A549 (cell line): ENCODE measurements at regions of chr18 and their contacts with region 1.

Region 1: DNA sequence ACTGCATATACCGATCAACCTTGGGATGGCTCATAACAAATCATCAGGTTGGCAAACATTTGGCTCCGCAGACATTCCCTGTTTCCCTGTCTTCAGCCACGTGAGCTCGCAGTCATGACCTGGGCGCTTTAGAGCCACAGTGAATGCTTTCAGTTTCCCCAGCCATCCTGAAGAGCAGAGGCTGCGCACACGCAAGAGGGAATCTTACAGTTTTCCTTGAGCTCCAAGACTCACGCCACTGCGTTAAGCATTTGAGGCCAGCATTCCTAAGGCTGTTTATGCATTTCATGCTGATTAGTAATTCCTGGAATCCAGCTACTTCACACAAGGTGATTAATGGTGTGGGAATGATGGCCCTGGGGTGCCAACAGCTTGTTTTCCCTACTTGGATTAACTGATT is 95.1 kb downstream of the MTCL1 start:
- DNase-seq: peak; percentile 60 to 93
- ATAC-seq: peak; percentile 89
- H3K4me3 ChIP-seq: no peak overlapping the region
- H3K27ac ChIP-seq: peak overlapping the region; percentile 96 to 99
- H3K4me1 ChIP-seq: peaks cover 97% of the 10 kb centered on the region
- CTCF ChIP-seq: no peak
- EP300 ChIP-seq: peak; percentile 59 to 80; a peak in 3 of 5 replicates
- POLR2A ChIP-seq: no peak
- RAD21 ChIP-seq: peak in 1 of 2 experiments; percentile 35; a peak in 2 of 5 replicates

Region 2: DNA sequence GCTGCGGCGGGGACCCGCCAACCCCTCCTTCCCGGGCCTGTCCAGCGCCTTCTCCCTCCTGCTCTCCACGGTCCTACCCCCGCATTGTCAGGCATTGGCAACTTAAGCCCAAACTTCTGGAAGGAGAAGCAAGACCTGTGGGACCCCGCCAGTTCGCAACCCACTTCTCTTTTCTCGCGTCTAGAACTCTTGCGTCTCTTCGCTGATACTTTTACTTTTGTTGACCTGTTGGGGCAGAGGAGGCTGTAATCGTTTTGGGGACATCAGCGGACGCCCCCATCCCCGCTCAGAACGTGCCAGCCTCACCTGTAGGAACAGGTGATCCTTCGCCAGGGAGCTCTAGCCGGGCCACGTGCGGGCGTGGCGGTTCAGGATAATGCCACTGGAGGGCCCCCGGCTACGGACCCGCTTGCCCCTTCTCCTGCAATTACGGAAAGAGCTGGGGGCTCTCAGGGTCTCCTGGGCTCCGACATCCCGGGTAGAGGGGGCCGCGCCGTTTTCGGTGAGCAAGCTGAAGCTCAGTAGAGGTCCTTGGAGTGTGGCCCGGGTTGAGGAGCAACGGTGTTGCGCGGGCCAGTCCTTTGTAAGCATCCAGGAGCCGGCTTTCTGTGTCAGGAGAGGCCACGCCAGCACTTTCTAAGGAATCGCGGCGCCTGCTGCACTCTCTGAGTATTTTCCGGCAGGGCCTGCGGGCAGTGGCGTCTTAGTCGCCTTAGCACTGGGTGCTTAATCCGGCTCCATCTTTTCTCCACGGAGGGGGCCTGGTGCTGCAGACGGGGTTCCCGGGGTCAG is 93.5 kb before region 1 on chr18:
- CTCF ChIA-PET with region 1: interaction called, 11 read pairs
- POLR2A ChIA-PET with region 1: interaction called, 9 read pairs
- DNase-seq: peak in 1 of 2 experiments; percentile 72
- ATAC-seq: peak; percentile 16 to 50; a peak in 3 of 6 replicates
- H3K4me3 ChIP-seq: peak overlapping the region; percentile 94
- H3K27ac ChIP-seq: peak overlapping the region; percentile 91 to 100
- H3K4me1 ChIP-seq: peaks cover 47% of the 10 kb centered on the region
- CTCF ChIP-seq: no peak
- EP300 ChIP-seq: no peak
- POLR2A ChIP-seq: no peak
- RAD21 ChIP-seq: no peak